Calu3 (cell line): ENCODE measurements at regions of chr17 and their contacts with region 1.

Region 1: GRCh38 chr17:4913994-4914393 is 11.1 kb upstream of the CHRNE start:
- DNase-seq: no peak
- H3K4me3 Mint-ChIP-seq: no peak overlapping the region
- H3K27ac Mint-ChIP-seq: no peak overlapping the region
- H3K4me1 Mint-ChIP-seq: no peaks in the 10 kb centered on the region
- H3K27me3 Mint-ChIP-seq: no peaks in the 10 kb centered on the region
- CTCF ChIP-seq: no peak

Region 2: DNA sequence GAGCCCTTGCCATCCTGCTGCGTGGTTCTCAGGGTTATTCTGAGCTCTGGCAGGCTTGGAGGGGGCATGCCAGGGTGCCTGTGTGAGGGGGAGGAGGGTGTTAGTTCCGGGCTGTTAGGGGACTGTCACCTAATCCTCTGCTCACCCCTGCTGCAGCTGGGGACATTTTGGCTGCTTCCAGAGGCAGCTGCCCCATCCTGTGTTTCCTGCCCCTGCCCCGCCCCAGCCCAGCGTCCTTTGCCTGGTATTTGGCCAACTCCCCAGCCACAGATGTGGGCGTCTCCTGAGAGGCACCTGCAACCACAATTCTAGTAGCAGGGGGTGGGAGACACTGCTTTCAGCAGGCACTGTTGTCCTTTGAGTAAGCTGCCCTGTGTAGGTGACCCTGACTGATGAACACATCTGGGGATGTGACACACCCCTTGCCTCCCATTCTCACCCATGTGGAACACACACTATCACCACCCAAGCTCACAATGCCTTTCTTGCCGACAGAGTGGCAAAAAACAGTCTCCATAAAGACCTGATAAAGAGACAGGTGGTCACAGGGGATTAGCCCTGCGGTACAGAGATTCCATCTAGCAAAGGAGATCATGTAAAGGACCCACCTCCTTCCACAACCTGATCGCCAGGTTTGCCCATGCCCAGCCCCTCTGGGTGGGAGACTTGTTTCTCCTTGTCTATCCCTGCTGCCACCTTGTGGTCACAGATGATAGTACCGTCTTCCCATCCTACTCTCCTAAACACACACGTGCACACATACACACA is 10.8 kb before region 1 on chr17 and contains the start of gene CHRNE:
- CTCF ChIA-PET with region 1: no interaction called
- intact Hi-C with region 1: no loop called
- DNase-seq: peak; percentile 75
- H3K4me3 Mint-ChIP-seq: no peak within 1 kb of the TSS
- H3K27ac Mint-ChIP-seq: peak within 1 kb of the TSS; percentile 50
- H3K4me1 Mint-ChIP-seq: peaks cover 14% of the 10 kb centered on the region
- H3K27me3 Mint-ChIP-seq: no peaks in the 10 kb centered on the region
- CTCF ChIP-seq: peak; percentile 57
- total RNA-seq, gene CHRNE: 0.19 TPM in 1 of 2 replicates, not detected in the other

Region 3: DNA sequence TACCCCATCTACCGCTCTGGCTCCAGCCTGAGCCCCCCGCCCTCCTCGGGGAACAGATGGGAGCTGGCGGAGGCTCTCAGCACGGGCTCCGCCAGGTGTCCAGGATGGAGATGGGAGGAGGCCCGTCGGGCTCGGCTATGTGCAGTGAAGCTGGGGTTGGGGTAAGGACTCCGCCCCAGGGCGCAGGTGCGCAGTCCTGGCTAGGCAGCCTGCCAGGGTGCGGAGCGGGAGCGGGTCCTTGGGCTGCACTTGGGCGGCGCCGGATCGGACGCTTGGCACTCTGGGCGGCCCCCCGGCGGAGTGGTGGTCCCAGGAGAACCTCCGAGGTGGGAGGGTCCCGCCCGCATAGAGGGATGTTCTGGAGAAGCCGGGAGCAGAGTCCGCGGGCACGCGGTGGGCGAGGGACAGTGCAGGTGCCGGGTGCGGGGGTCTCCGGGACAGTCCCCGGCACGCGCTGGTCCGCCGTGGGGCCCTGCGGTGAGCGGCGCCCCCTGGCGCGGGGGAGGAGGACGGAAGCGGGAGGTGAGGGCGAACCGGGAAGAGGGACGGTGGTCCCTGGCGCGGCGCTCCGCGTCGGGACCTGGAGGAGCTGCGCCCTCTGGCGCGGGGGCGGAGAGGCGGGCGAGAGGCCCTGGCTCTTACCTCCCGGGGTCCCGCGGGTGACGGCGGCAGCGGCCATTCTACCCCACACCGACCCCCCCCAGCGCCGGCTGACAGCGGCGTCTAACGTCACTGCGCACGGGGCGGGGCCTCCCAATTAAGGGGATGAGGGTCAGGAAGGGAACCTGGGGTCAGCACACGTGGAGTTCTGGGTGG is 73.2 kb after region 1 on chr17 and contains the start of gene CAMTA2:
- CTCF ChIA-PET with region 1: interaction called, 8 read pairs
- intact Hi-C with region 1: loop called (anchors 10 kb)
- DNase-seq: peak; percentile 82
- H3K4me3 Mint-ChIP-seq: peak within 1 kb of the TSS; percentile 92
- H3K27ac Mint-ChIP-seq: peak within 1 kb of the TSS; percentile 50
- H3K4me1 Mint-ChIP-seq: peaks cover 32% of the 10 kb centered on the region
- H3K27me3 Mint-ChIP-seq: no peaks in the 10 kb centered on the region
- CTCF ChIP-seq: peak; percentile 64
- total RNA-seq, gene CAMTA2: 21.4 and 32.3 TPM in 2 replicates